Activated CD4-positive, alpha-beta T cell treated with anti-CD3 and anti-CD28 coated beads for 36 hours (primary cell): ENCODE measurements at regions of chr3 and their contacts with region 1.

Region 1: GRCh38 chr3:196073188-196073838 is 8.6 kb downstream of the TFRC start:
- DNase-seq: peak; percentile 78
- ATAC-seq: peak; percentile 96
- H3K4me3 Mint-ChIP-seq: no peak overlapping the region
- H3K27ac Mint-ChIP-seq: peak overlapping the region; percentile 72
- H3K4me1 Mint-ChIP-seq: peaks cover 29% of the 10 kb centered on the region
- H3K27me3 Mint-ChIP-seq: no peaks in the 10 kb centered on the region

Region 2: DNA sequence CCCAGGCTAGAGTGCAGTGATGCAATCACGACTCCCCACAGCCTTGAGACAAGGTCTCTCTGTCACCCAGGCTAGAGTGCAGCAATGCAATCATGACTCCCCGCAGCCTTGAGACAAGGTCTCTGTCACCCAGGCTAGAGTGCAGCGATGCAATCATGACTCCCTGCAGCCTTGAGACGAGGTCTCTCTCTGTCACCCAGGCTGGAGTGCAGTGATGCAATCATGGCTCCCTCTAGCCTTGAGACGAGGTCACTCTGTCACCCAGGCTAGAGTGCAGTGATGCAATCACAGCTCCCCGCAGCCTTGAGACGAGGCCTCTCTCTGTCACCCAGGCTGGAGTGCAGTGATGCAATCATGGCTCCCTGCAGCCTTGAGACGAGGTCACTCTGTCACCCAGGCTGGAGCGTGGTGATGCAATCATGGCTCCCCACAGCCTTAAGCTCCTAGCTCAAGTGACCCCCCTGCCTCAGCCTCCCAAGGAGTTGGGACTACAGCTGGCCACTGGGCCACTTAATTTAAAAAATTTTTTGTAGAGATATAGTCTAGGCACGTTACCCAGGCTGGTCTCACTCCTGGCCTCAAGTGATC is 17.5 kb before region 1 on chr3:
- CTCF ChIA-PET with region 1: interaction called, 83 read pairs
- POLR2A ChIA-PET with region 1: interaction called, 4 read pairs
- intact Hi-C with region 1: no loop called
- DNase-seq: no peak
- ATAC-seq: peak; percentile 63
- H3K4me3 Mint-ChIP-seq: no peak overlapping the region
- H3K27ac Mint-ChIP-seq: peak overlapping the region; percentile 38
- H3K4me1 Mint-ChIP-seq: no peaks in the 10 kb centered on the region
- H3K27me3 Mint-ChIP-seq: no peaks in the 10 kb centered on the region

Region 3: GRCh38 chr3:196186651-196187573 is 113.6 kb after region 1 on chr3:
- CTCF ChIA-PET with region 1: interaction called, 30 read pairs
- POLR2A ChIA-PET with region 1: interaction called, 4 read pairs
- intact Hi-C with region 1: no loop called
- DNase-seq: peak; percentile 41
- ATAC-seq: peak; percentile 4
- H3K4me3 Mint-ChIP-seq: peak overlapping the region; percentile 36
- H3K27ac Mint-ChIP-seq: peak overlapping the region; percentile 73
- H3K4me1 Mint-ChIP-seq: peaks cover 34% of the 10 kb centered on the region
- H3K27me3 Mint-ChIP-seq: no peaks in the 10 kb centered on the region

Region 4: DNA sequence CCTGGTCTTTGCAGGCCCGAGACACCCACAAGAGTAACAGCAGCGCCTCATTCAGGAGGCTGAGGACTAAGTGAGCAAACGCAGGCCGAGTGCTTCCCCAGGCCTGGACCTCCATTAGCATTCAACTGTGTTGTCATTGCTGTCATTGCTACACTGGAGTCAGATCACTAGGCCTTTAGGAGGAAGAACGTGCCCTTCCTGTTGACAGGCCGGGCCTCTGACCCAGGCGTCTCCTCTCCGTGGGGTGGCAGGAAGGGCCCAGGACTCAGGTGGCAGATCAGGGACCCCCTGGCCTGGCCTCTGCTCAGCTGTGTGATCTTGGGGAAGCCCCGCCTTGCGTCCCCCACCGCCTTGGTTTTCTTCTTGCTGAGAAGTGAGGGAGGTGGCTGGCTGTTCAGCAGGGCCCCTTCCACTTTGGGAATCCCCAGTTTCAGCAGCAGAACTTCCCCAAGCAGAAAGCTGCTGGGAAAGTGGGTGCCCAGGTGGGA is 118.8 kb after region 1 on chr3:
- CTCF ChIA-PET with region 1: interaction called, 156 read pairs
- POLR2A ChIA-PET with region 1: no interaction called
- intact Hi-C with region 1: loop called (anchors 1 kb)
- DNase-seq: peak; percentile 70
- ATAC-seq: peak; percentile 62
- H3K4me3 Mint-ChIP-seq: peak overlapping the region; percentile 40
- H3K27ac Mint-ChIP-seq: peak overlapping the region; percentile 95
- H3K4me1 Mint-ChIP-seq: peaks cover 31% of the 10 kb centered on the region
- H3K27me3 Mint-ChIP-seq: no peaks in the 10 kb centered on the region

Region 5: DNA sequence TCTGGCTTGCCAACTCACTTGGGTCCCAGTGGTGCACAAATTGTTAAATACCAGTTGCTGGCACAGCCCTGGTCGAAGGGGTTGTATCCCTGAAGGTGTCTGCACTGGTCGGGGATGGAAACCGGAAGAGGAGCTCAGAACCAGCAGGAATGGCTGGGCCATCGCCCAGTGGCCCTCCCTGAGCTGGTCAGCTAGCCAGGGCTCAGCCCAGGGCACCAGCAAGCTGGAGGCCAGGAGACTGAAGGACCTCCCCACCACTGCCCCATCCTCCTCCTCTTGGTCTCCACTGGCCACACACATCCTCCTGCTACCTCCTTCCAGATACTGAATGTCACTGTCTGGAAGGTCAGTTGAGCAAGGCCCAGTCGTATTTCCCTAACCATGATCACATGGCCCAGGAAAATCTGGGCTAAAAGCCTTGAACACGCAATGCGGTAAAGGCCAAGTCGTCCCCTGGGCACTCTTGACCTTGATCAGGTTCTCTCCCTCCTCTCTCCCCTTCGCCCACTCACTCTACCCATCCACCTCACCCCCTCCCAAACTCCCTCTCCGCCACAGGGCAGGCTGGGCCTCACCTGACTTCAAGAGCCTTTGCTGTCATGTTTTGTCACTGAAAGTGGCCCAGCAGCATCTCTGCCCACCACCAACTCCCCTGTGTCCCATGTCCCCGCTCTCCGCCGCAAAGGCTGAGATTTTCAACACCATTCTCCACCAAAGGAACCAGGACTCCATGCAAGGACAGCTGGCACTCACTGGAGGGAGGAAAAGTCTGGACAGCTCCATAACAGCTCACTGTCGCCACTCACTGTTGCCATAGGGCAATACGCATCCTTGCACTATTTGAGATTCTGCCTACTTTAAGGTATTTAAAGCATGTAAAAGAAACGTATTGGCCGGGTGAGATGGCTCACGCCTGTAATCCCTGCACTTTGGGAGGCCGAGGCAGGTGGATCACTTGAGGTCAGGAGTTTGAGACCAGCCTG is 125.7 kb after region 1 on chr3:
- CTCF ChIA-PET with region 1: interaction called, 156 read pairs
- POLR2A ChIA-PET with region 1: no interaction called
- intact Hi-C with region 1: loop called (anchors 1 kb)
- DNase-seq: no peak
- ATAC-seq: no peak
- H3K4me3 Mint-ChIP-seq: no peak overlapping the region
- H3K27ac Mint-ChIP-seq: no peak overlapping the region
- H3K4me1 Mint-ChIP-seq: peaks cover 7% of the 10 kb centered on the region
- H3K27me3 Mint-ChIP-seq: no peaks in the 10 kb centered on the region